HCT116 (cell line): ENCODE measurements at regions of chr15 and their contacts with region 1.

Region 1: DNA sequence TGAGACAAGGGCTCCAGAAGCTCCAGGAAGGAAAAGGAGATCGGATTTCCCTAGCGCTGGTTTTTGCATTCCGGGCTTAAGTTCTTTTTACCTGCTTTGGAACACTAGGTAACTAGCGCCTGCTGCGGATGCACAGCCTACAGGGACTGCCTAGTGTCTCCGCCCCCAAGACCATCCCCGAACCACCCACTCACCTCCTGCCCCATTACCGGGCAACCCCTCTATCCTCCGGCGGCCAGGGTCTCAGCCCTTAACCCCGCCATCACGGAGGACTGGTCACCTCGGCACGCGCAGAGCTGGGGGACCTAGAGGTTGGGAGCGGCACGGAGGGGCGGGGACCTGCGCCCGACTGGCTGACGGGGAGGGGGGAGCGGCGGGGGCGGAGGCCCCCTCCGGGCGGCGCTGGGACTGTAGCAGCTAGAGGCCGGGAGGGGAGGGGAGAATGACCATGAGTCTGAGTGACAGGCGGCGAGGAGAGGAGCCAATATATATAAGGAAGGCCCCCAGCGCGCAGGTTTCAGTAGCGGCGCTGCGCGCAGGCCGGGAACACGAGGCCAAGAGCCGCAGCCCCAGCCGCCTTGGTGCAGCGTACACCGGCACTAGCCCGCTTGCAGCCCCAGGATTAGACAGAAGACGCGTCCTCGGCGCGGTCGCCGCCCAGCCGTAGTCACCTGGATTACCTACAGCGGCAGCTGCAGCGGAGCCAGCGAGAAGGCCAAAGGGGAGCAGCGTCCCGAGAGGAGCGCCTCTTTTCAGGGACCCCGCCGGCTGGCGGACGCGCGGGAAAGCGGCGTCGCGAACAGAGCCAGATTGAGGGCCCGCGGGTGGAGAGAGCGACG is at the start of gene DLL4:
- DNase-seq: peak; percentile 71
- ATAC-seq: peak; percentile 74
- H3K4me3 ChIP-seq: peak within 1 kb of the TSS; percentile 52 to 65
- H3K27ac ChIP-seq: peak within 1 kb of the TSS; percentile 22; the same call in 1 of the 2 replicates
- H3K4me1 ChIP-seq: peaks cover 19 to 41% of the 10 kb centered on the region in 2 experiments
- H3K27me3 ChIP-seq: peaks cover 15% of the 10 kb centered on the region; the same call in 1 of the 2 replicates
- CTCF ChIP-seq: no peak
- POLR2A ChIP-seq: peak; percentile 95
- RAD21 ChIP-seq: no peak
- total RNA-seq, gene DLL4: 1.5 TPM

Region 2: DNA sequence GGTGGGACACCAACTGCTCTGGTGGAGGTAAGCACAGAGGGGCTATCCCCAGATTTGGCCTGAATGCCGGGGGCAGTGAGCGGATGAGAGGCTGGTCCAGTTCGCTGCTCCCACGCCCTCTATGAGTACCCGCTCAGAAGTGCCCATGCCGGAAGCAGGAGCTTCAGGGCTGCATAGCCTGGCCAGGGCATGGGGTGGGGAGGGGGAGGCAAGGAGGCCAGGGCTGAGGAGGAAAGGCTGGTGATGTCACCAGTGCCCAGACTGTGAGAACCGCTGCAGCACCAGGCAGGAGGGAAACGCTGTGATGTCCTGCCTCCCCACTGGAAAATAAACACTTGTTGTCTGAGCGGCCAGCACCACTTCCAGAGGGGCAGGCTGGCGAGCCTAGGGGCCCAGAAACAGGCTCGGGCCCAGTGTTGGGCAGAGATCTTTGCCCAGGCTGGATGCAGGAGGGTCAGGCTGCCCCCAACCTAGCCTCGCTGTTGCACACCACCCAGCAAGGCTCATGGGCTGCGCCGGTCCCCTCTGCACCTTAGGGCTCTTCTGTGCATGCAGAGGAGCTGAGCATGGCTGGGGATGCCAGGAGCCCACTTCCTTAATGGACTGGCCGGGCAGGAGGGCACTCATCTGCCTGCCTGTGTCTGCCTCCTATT is 10.8 kb before region 1 on chr15:
- CTCF ChIA-PET with region 1: interaction called, 4 read pairs
- POLR2A ChIA-PET with region 1: interaction called, 11 read pairs
- RAD21 ChIA-PET with region 1: no interaction called
- intact Hi-C with region 1: no loop called
- DNase-seq: no peak
- ATAC-seq: no peak
- H3K4me3 ChIP-seq: no peak overlapping the region
- H3K27ac ChIP-seq: no peak overlapping the region
- H3K4me1 ChIP-seq: no peaks in the 10 kb centered on the region
- H3K27me3 ChIP-seq: no peaks in the 10 kb centered on the region
- CTCF ChIP-seq: no peak
- POLR2A ChIP-seq: no peak
- RAD21 ChIP-seq: no peak

Region 3: DNA sequence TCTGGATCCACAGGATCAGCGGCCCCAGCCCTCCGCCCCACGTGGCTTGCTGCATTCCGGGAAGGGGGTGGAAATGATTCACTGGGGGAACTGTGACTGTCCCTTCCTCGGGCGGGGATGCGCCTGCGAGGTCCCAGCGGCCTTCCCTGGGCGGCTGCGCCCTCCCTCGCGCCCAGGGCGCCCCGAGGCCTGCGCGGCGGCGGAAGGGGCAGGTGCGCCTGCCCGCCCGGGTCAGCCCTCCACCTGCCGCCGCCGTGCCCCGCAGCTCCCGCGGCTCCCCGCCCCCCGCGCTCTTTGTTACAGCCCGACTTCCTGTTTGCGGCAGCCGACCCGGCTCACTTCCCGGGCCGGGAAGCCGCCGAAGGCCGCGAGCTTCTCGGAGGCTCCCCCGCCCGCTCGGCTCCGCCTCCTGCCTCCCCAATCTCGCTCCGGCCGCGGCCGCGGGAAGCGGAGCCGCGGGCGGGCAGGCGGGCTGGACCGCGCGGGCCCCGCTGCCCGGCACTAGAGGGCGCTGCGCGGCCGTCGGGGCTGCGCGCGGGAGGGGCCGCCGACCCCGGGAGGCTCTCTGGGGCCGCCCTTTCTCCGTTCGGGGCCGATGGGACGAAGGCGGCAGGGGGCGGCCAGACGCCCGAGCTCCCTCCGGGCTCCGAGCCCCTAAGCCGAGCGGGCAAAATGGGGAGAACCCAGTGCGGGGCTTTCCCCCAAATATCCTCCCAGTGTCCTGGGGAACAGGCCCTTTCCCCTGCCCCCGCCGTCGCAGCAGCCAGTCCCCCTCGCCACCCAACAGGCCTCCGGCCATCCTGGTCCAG is 12.7 kb after region 1 on chr15:
- CTCF ChIA-PET with region 1: interaction called, 36 read pairs
- POLR2A ChIA-PET with region 1: interaction called, 39 read pairs
- RAD21 ChIA-PET with region 1: interaction called in 1 of 2 experiments, 4 read pairs
- intact Hi-C with region 1: no loop called
- DNase-seq: no peak
- ATAC-seq: peak; percentile 87
- H3K4me3 ChIP-seq: peak overlapping the region; percentile 53 to 60
- H3K27ac ChIP-seq: peak overlapping the region; percentile 72
- H3K4me1 ChIP-seq: peaks cover 17 to 18% of the 10 kb centered on the region in 2 experiments; a peak in 3 of 4 replicates
- H3K27me3 ChIP-seq: no peaks in the 10 kb centered on the region
- CTCF ChIP-seq: peak; percentile 20 to 33 (median 32); a peak in 3 of 6 replicates
- POLR2A ChIP-seq: peak; percentile 55
- RAD21 ChIP-seq: peak; percentile 53

Region 4: GRCh38 chr15:40952901-40953712 is 24.1 kb after region 1 on chr15 and contains the start of gene CHAC1:
- CTCF ChIA-PET with region 1: interaction called, 5 read pairs
- POLR2A ChIA-PET with region 1: interaction called, 48 read pairs
- RAD21 ChIA-PET with region 1: interaction called in 1 of 2 experiments, 7 read pairs
- intact Hi-C with region 1: no loop called
- DNase-seq: peak; percentile 94
- ATAC-seq: peak; percentile 94
- H3K4me3 ChIP-seq: peak within 1 kb of the TSS; percentile 68 to 73
- H3K27ac ChIP-seq: peak within 1 kb of the TSS; percentile 74
- H3K4me1 ChIP-seq: peaks cover 9 to 23% of the 10 kb centered on the region in 2 experiments; a peak in 2 of 4 replicates
- H3K27me3 ChIP-seq: no peaks in the 10 kb centered on the region
- CTCF ChIP-seq: no peak
- POLR2A ChIP-seq: peak; percentile 86
- RAD21 ChIP-seq: no peak
- total RNA-seq, gene CHAC1: 58.9 TPM

Region 5: GRCh38 chr15:40974879-40975278 is 45.8 kb after region 1 on chr15:
- CTCF ChIA-PET with region 1: no interaction called
- POLR2A ChIA-PET with region 1: no interaction called
- RAD21 ChIA-PET with region 1: interaction called in 1 of 2 experiments, 10 read pairs
- intact Hi-C with region 1: no loop called
- DNase-seq: no peak
- ATAC-seq: no peak
- H3K4me3 ChIP-seq: no peak overlapping the region
- H3K27ac ChIP-seq: no peak overlapping the region
- H3K4me1 ChIP-seq: peaks cover 0 to 3% of the 10 kb centered on the region in 2 experiments; a peak in 1 of 4 replicates
- H3K27me3 ChIP-seq: no peaks in the 10 kb centered on the region
- CTCF ChIP-seq: no peak
- POLR2A ChIP-seq: no peak
- RAD21 ChIP-seq: no peak

Region 6: DNA sequence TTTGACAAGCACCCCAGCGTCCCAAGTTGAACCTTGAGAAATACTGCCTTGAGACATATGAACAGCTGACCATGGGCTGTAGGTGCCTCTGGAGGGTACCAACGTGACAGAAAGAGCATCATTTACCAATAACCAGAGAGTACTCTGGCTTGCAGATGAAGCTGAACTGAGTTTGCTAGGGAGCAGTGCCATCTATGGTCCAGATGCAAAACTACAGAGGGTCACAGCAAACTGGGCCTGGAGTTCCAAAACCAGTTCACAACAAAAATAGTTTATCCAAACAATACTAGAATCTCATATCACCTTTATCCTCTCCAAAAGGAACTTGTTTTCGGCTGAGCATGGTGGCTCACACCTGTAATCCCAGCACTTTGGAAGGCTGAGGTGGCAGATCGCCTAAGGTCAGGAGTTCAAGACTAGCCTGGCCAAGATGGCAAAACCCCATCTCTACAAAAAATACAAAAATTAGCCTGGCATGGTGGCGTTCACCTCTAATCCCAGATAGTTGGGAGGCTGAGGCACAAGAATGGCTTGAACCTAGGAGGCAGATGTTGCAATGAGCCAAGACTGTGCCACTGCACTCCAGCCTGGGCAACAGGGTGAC is 93.5 kb after region 1 on chr15:
- CTCF ChIA-PET with region 1: interaction called, 9 read pairs
- POLR2A ChIA-PET with region 1: no interaction called
- RAD21 ChIA-PET with region 1: interaction called in 1 of 2 experiments, 6 read pairs
- intact Hi-C with region 1: loop called (anchors 5 kb)
- DNase-seq: peak; percentile 28
- ATAC-seq: peak; percentile 90
- H3K4me3 ChIP-seq: no peak overlapping the region
- H3K27ac ChIP-seq: no peak overlapping the region
- H3K4me1 ChIP-seq: no peaks in the 10 kb centered on the region
- H3K27me3 ChIP-seq: no peaks in the 10 kb centered on the region
- CTCF ChIP-seq: peak; percentile 68 to 74 (median 73)
- POLR2A ChIP-seq: no peak
- RAD21 ChIP-seq: peak; percentile 76

Region 7: DNA sequence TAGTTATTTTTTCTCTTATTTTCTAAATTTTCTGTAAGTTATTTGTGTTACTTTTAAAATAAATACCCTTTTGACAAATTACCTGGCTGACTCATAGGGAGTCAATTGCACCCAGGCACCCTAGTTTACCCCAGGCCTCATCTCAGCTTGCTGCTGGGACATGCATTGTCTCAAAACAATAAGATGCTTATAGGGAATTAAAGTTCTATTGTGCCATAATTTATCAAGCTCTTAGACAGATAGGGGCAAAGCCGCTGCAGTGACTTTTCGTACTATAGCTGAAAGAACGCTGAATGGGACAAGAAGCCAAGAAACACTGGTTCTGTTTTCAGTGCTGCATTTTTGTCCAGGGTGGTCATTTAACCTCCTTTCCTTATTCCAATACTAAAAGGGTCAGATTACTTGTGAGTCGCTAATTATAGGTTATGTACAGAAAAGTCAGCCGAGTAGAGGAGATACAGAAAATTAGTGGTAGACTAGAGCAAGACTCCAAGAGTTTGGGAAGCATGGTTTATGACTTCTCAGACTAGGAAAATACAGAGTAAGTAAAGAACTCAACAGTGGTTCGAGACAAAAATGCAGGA is 251.3 kb after region 1 on chr15:
- CTCF ChIA-PET with region 1: interaction called, 13 read pairs
- POLR2A ChIA-PET with region 1: interaction called, 3 read pairs
- RAD21 ChIA-PET with region 1: interaction called in 1 of 2 experiments, 5 read pairs
- intact Hi-C with region 1: loop called (anchors 10 kb)
- DNase-seq: no peak
- ATAC-seq: no peak
- H3K4me3 ChIP-seq: no peak overlapping the region
- H3K27ac ChIP-seq: no peak overlapping the region
- H3K4me1 ChIP-seq: peaks cover 2 to 8% of the 10 kb centered on the region in 2 experiments; a peak in 1 of 4 replicates
- H3K27me3 ChIP-seq: no peaks in the 10 kb centered on the region
- CTCF ChIP-seq: no peak
- POLR2A ChIP-seq: no peak
- RAD21 ChIP-seq: no peak